HepG2 (cell line): ENCODE measurements at regions of chr11 and their contacts with region 1.

Region 1: DNA sequence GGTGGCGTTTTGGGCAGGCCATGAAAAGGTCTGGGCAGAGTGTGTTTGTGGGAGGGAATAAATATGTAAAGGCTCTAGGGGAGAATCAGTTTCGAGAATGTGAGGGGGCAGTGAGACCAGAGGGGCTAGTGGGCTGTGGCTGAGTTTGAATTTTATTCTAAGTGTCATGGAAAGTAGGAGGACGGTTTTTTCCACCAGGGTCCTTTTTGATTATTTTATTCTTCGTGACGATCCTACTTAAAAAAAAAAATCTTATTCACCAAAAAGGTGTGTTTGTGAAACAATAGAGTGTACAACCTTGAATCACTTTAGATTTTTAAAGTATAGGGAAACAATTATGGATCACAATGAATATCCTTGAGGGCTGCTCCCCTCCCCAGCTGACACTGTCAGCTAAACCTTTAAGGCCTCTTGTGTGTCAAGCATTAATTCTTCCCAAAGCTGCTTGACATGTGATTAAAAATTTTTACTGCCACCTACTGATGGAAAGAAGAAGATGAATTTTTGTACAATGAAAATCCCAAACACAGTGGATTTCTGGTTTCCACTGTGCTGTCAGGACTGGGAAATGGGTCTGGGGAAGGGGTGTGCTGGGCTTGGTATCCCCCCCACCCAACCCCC is 107.5 kb upstream of the OR4B1 start:
- DNase-seq: peak; percentile 25
- ATAC-seq: peak; percentile 75
- H3K4me3 ChIP-seq: peak overlapping the region in 1 of 3 experiments; percentile 43; a peak in 2 of 6 replicates
- H3K27ac ChIP-seq: no peak overlapping the region
- H3K4me1 ChIP-seq: peaks cover 17% of the 10 kb centered on the region
- H3K27me3 ChIP-seq: no peaks in the 10 kb centered on the region
- CTCF ChIP-seq: peak; percentile 55
- EP300 ChIP-seq: no peak
- POLR2A ChIP-seq: no peak
- RAD21 ChIP-seq: no peak

Region 2: DNA sequence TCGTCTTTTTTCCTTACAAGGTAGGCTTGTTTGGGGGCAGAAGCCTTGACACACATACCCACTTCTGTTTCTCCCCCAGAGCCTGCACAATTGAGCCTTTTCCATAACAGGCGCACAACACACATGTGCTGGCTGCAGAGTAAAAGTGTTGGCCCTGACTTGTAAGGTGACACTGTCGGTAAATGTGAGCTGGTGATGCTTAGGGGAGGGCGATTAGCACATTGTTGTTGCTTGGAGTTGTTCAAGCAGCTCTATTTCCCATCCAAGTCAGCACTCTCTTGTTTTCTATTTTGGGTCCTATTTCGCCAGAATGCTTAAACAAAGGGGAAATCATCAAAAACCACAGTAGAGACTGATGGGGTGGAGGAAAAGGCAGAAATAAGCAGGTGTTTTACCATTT is 180.7 kb before region 1 on chr11:
- CTCF ChIA-PET with region 1: interaction called, 57 read pairs
- POLR2A ChIA-PET with region 1: no interaction called
- in situ Hi-C with region 1: no loop called
- intact Hi-C with region 1: no loop called
- DNase-seq: no peak
- ATAC-seq: no peak
- H3K4me3 ChIP-seq: no peak overlapping the region
- H3K27ac ChIP-seq: no peak overlapping the region
- H3K4me1 ChIP-seq: peaks cover 12% of the 10 kb centered on the region; the same call in 1 of the 2 replicates
- H3K27me3 ChIP-seq: no peaks in the 10 kb centered on the region
- CTCF ChIP-seq: no peak
- EP300 ChIP-seq: no peak
- POLR2A ChIP-seq: no peak
- RAD21 ChIP-seq: no peak

Region 3: DNA sequence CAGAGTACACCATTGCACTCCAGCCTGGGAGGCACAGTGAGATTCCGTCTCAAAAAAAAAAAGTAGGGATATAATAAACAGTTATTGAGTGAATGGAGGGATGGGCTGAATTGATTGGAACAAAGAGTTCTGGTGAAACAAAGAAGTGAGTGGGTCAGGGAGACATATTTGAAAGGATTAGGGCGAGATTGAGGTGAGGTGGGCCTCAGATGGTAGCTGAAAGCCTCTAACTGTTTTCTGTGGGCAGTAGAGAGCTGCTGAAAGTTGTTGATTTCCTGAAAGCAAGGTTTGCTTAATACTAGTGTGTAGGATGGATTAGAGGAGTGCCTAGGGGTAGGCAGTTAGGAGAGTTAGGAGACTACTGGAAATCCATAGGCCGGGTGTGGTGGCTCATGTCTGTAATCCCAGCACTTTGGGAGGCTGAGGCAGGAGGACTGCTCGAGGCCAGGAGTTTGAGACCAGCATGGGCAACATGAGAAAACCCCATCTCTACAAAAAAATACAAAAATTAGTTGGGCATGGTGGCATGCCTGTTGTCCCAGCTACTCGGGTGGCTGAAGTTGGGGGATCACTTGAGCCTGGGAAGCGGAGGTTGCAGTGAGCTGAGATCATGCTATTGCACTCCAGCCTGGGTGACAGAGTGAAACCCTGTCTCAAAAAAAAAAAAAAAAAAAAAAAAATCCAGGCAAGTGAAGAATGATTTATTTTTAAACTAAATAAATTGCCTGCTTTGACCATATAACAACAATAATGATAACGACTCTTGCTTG is 170.2 kb before region 1 on chr11:
- CTCF ChIA-PET with region 1: interaction called, 57 read pairs
- POLR2A ChIA-PET with region 1: no interaction called
- in situ Hi-C with region 1: loop called (anchors 5 kb)
- intact Hi-C with region 1: loop called (anchors 1 kb)
- DNase-seq: no peak
- ATAC-seq: no peak
- H3K4me3 ChIP-seq: no peak overlapping the region
- H3K27ac ChIP-seq: no peak overlapping the region
- H3K4me1 ChIP-seq: peaks cover 51% of the 10 kb centered on the region
- H3K27me3 ChIP-seq: no peaks in the 10 kb centered on the region
- CTCF ChIP-seq: no peak
- EP300 ChIP-seq: no peak
- POLR2A ChIP-seq: no peak
- RAD21 ChIP-seq: no peak

Region 4: GRCh38 chr11:47980245-47981049 is 128.7 kb before region 1 on chr11 and contains the start of gene PTPRJ:
- CTCF ChIA-PET with region 1: no interaction called
- POLR2A ChIA-PET with region 1: no interaction called
- in situ Hi-C with region 1: no loop called
- intact Hi-C with region 1: loop called (anchors 5 kb)
- DNase-seq: no peak
- ATAC-seq: peak; percentile 70
- H3K4me3 ChIP-seq: peak within 1 kb of the TSS; percentile 62 to 69 (median 63)
- H3K27ac ChIP-seq: no peak within 1 kb of the TSS
- H3K4me1 ChIP-seq: peaks cover 34% of the 10 kb centered on the region
- H3K27me3 ChIP-seq: peaks cover 4 to 30% of the 10 kb centered on the region in 2 experiments
- CTCF ChIP-seq: 0 out of 2 replicates have a peak, but pooled peaks have one; percentile 13
- EP300 ChIP-seq: no peak
- POLR2A ChIP-seq: no peak
- RAD21 ChIP-seq: peak; percentile 16; the same call in 1 of the 2 replicates
- total RNA-seq, gene PTPRJ: 0.95 and 1.0 TPM in 2 replicates

Region 5: GRCh38 chr11:48052183-48053045 is 56.7 kb before region 1 on chr11:
- CTCF ChIA-PET with region 1: no interaction called
- POLR2A ChIA-PET with region 1: no interaction called
- in situ Hi-C with region 1: no loop called
- intact Hi-C with region 1: no loop called
- DNase-seq: no peak
- ATAC-seq: peak; percentile 39; the same call in 1 of the 3 replicates
- H3K4me3 ChIP-seq: no peak overlapping the region
- H3K27ac ChIP-seq: no peak overlapping the region
- H3K4me1 ChIP-seq: peaks cover 25% of the 10 kb centered on the region
- H3K27me3 ChIP-seq: no peaks in the 10 kb centered on the region
- CTCF ChIP-seq: no peak
- EP300 ChIP-seq: no peak
- POLR2A ChIP-seq: no peak
- RAD21 ChIP-seq: no peak